Calu3 (cell line): ENCODE measurements at regions of chr19 and their contacts with region 1.

Region 1: GRCh38 chr19:925526-926322 is at the start of gene ARID3A:
- DNase-seq: peak; percentile 60
- H3K4me3 Mint-ChIP-seq: peak within 1 kb of the TSS; percentile 53
- H3K27ac Mint-ChIP-seq: no peak within 1 kb of the TSS
- H3K4me1 Mint-ChIP-seq: no peaks in the 10 kb centered on the region
- H3K27me3 Mint-ChIP-seq: peaks cover 11% of the 10 kb centered on the region
- CTCF ChIP-seq: no peak
- total RNA-seq, gene ARID3A: 0.85 and 1.6 TPM in 2 replicates

Region 2: DNA sequence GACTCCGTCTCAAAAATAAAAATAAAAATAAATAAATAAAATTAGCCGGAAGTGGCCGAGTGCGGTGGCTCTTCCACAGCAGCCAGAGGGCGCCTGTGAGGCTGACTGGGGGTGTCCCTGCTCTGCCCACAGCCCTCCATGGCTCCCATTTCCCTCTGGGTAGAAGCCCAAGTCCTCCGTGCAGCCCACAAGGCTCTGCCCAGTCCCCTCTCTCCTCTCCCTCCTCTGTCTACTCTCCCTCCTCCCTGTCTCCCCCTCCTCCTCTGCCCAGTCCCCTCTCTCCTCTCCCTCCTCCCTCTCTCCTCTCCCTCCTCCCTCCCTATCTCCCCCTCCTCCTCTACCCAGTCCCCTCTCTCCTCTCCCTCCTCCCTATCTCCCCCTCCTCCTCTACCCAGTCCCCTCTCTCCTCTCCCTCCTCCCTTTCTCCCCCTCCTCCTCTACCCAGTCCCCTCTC is 154.4 kb before region 1 on chr19:
- CTCF ChIA-PET with region 1: no interaction called
- intact Hi-C with region 1: loop called (anchors 5 kb)
- DNase-seq: peak; percentile 46
- H3K4me3 Mint-ChIP-seq: no peak overlapping the region
- H3K27ac Mint-ChIP-seq: no peak overlapping the region
- H3K4me1 Mint-ChIP-seq: no peaks in the 10 kb centered on the region
- H3K27me3 Mint-ChIP-seq: no peaks in the 10 kb centered on the region
- CTCF ChIP-seq: no peak

Region 3: GRCh38 chr19:902446-903226 is 23.1 kb before region 1 on chr19:
- CTCF ChIA-PET with region 1: no interaction called
- intact Hi-C with region 1: no loop called
- DNase-seq: no peak
- H3K4me3 Mint-ChIP-seq: no peak overlapping the region
- H3K27ac Mint-ChIP-seq: no peak overlapping the region
- H3K4me1 Mint-ChIP-seq: no peaks in the 10 kb centered on the region
- H3K27me3 Mint-ChIP-seq: no peaks in the 10 kb centered on the region
- CTCF ChIP-seq: no peak

Region 4: DNA sequence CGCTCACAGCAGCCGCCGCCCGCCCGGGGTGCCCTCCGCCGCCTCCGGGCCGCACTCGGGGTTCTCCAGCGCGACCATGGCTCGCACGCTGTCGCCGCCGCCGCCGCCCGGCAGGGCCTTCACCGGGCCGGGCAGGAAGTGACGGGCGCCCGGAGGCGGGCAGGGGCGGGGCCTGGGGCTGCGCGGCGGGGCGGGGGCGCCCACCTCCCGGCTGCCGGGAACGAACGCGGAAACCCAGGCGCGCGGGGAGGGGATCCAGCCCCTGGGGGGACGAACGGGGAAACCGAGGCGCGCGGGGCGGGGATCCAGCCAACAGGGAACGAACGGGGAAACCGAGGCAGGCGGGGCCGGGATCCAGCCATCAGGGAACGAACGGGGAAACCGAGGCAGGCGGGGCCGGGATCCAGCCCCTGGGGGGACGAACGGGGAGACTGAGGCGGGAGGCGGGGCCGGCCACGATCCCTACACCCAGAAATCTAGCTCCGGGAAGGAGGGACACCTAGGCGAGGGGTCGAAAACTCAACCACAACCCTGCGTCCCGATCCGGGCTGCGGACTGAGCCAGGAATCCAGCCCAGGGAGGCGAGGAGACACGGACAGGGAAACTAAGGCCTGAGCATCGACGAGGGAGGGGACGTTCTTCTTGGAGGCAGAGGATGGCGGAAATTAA is 12.5 kb before region 1 on chr19 and contains the start of gene R3HDM4:
- CTCF ChIA-PET with region 1: no interaction called
- intact Hi-C with region 1: no loop called
- DNase-seq: peak; percentile 80
- H3K4me3 Mint-ChIP-seq: peak within 1 kb of the TSS; percentile 73
- H3K27ac Mint-ChIP-seq: peak within 1 kb of the TSS; percentile 39
- H3K4me1 Mint-ChIP-seq: peaks cover 8% of the 10 kb centered on the region
- H3K27me3 Mint-ChIP-seq: no peaks in the 10 kb centered on the region
- CTCF ChIP-seq: no peak
- total RNA-seq, gene R3HDM4: 54.0 and 55.5 TPM in 2 replicates

Region 5: DNA sequence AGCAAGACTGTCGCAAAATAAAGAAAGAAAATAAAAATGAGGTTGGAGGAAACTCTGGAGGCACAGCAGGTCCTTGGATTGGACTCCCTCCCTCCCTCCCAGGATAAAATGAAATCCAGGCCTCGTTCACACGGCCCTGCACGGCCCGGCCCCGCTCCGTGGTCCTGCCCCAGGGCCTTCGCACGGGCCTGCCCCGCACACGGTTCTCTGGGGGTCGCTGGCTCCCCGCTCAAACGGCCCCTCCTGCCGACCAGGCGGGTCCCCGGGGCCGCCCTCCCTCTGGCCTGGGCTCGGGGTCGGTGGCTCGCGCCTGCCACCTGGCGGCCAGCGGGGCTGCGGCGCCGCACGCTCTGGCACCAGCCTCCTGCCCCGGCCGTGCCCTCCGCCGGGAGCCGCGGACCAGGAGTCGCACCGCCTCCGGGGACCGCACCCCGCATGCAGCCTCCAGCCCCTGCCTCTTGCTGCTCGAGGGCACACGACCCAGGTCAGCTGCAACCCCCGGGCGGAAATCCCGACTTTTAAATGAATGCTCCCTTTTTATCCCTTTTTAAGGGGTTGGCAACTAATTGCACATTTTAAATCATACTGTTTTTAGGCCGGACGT is 56.9 kb after region 1 on chr19:
- CTCF ChIA-PET with region 1: interaction called, 6 read pairs
- intact Hi-C with region 1: loop called (anchors 1 kb)
- DNase-seq: peak; percentile 76
- H3K4me3 Mint-ChIP-seq: no peak overlapping the region
- H3K27ac Mint-ChIP-seq: no peak overlapping the region
- H3K4me1 Mint-ChIP-seq: no peaks in the 10 kb centered on the region
- H3K27me3 Mint-ChIP-seq: no peaks in the 10 kb centered on the region
- CTCF ChIP-seq: peak; percentile 81